ENCODE measurements at regions of chr2 and their contacts with region 1.

Region 1: GRCh38 chr2:233251306-233252116 is at the start of gene ATG16L1:
- DNase-seq: peak; percentile 90
- ATAC-seq: peak; percentile 86
- H3K4me3 ChIP-seq: peak within 1 kb of the TSS; percentile 89 to 91
- H3K27ac ChIP-seq: peak within 1 kb of the TSS; percentile 56
- H3K4me1 ChIP-seq: peaks cover 23 to 46% of the 10 kb centered on the region in 2 experiments
- H3K27me3 ChIP-seq: no peaks in the 10 kb centered on the region
- CTCF ChIP-seq: peak; percentile 89 to 97 (median 92)
- POLR2A ChIP-seq: peak; percentile 59
- RAD21 ChIP-seq: peak; percentile 100
- total RNA-seq, gene ATG16L1: 43.4 TPM

Region 2: GRCh38 chr2:232609607-232610006 is 641.9 kb before region 1 on chr2:
- CTCF ChIA-PET with region 1: no interaction called
- POLR2A ChIA-PET with region 1: no interaction called
- RAD21 ChIA-PET with region 1: no interaction called
- intact Hi-C with region 1: loop called (anchors 5 kb)
- DNase-seq: no peak
- ATAC-seq: no peak
- H3K4me3 ChIP-seq: no peak overlapping the region
- H3K27ac ChIP-seq: no peak overlapping the region
- H3K4me1 ChIP-seq: peaks cover 0 to 8% of the 10 kb centered on the region in 2 experiments; a peak in 3 of 4 replicates
- H3K27me3 ChIP-seq: no peaks in the 10 kb centered on the region
- CTCF ChIP-seq: no peak
- POLR2A ChIP-seq: no peak
- RAD21 ChIP-seq: no peak

Region 3: GRCh38 chr2:232854082-232854481 is 397.4 kb before region 1 on chr2:
- CTCF ChIA-PET with region 1: interaction called, 3 read pairs
- POLR2A ChIA-PET with region 1: interaction called, 5 read pairs
- RAD21 ChIA-PET with region 1: no interaction called
- intact Hi-C with region 1: loop called (anchors 1 kb)
- DNase-seq: peak; percentile 78
- ATAC-seq: peak; percentile 58
- H3K4me3 ChIP-seq: peak overlapping the region in 1 of 2 experiments; percentile 41; a peak in 2 of 4 replicates
- H3K27ac ChIP-seq: peak overlapping the region; percentile 72; the same call in 1 of the 2 replicates
- H3K4me1 ChIP-seq: peaks cover 54 to 64% of the 10 kb centered on the region in 2 experiments
- H3K27me3 ChIP-seq: no peaks in the 10 kb centered on the region
- CTCF ChIP-seq: no peak
- POLR2A ChIP-seq: no peak
- RAD21 ChIP-seq: peak; percentile 28; the same call in 1 of the 2 replicates

Region 4: GRCh38 chr2:233053928-233054784 is 197.4 kb before region 1 on chr2:
- CTCF ChIA-PET with region 1: no interaction called
- POLR2A ChIA-PET with region 1: no interaction called
- RAD21 ChIA-PET with region 1: no interaction called
- intact Hi-C with region 1: loop called (anchors 5 kb)
- DNase-seq: peak; percentile 48
- ATAC-seq: peak; percentile 98
- H3K4me3 ChIP-seq: no peak overlapping the region
- H3K27ac ChIP-seq: no peak overlapping the region
- H3K4me1 ChIP-seq: peaks cover 2 to 16% of the 10 kb centered on the region in 2 experiments; a peak in 2 of 4 replicates
- H3K27me3 ChIP-seq: no peaks in the 10 kb centered on the region; the same call in 1 of the 2 replicates
- CTCF ChIP-seq: peak; percentile 92 to 98 (median 96)
- POLR2A ChIP-seq: no peak
- RAD21 ChIP-seq: peak; percentile 93

Region 5: DNA sequence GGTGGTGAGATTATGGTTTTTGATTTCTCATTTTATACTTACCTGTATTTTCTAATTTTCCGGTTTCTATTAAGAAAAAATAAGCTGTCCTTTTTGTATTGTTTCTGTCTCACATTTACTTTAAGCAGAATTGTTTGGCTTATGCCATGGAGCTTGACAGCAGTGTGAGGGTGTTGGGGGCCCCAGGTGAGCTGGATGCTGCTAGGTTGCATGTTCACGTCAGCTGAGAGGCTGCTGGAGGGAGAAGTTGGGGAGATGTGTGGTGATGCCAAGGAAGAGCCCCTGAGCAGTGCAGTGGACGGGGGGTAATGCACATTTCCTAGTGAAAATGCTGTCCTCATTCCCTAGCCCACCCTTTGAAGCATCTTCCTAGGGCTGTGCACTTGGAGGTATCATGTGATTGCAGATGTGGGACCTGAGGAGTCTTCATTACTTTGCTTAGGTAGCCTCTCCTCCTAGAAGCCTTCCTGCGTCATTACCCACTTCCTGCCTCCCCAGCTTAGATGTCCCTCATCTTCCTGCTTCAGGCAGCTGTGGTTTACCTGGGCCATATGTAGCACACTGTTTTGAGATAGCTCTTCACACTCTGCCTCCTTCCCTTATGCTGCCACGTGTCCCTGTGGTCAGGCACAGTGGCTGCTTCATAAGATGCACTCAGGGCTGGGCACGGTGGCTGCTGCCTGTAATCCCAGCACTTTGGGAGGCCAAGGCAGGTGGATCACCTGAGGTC is 16.2 kb after region 1 on chr2:
- CTCF ChIA-PET with region 1: no interaction called
- POLR2A ChIA-PET with region 1: no interaction called
- RAD21 ChIA-PET with region 1: no interaction called
- intact Hi-C with region 1: no loop called
- DNase-seq: no peak
- ATAC-seq: no peak
- H3K4me3 ChIP-seq: no peak overlapping the region
- H3K27ac ChIP-seq: no peak overlapping the region
- H3K4me1 ChIP-seq: no peaks in the 10 kb centered on the region
- H3K27me3 ChIP-seq: no peaks in the 10 kb centered on the region
- CTCF ChIP-seq: no peak
- POLR2A ChIP-seq: no peak
- RAD21 ChIP-seq: no peak

Region 6: GRCh38 chr2:233353769-233354499 is 102.4 kb after region 1 on chr2 and contains the start of gene DGKD:
- CTCF ChIA-PET with region 1: no interaction called
- POLR2A ChIA-PET with region 1: no interaction called
- RAD21 ChIA-PET with region 1: no interaction called
- intact Hi-C with region 1: loop called (anchors 5 kb)
- DNase-seq: peak; percentile 29
- ATAC-seq: peak; percentile 71
- H3K4me3 ChIP-seq: peak within 1 kb of the TSS; percentile 65 to 82
- H3K27ac ChIP-seq: peak within 1 kb of the TSS; percentile 80
- H3K4me1 ChIP-seq: peaks cover 37 to 63% of the 10 kb centered on the region in 2 experiments
- H3K27me3 ChIP-seq: no peaks in the 10 kb centered on the region
- CTCF ChIP-seq: peak in 2 of 3 experiments; percentile 14 to 34; a peak in 2 of 6 replicates
- POLR2A ChIP-seq: no peak
- RAD21 ChIP-seq: no peak
- total RNA-seq, gene DGKD: 52.0 TPM

Measured in HCT116 (cell line).